MCF 10A (cell line): ENCODE measurements at regions of chr14 and their contacts with region 1.

Region 1: GRCh38 chr14:31207755-31208545 is at the start of gene HECTD1:
- DNase-seq: peak; percentile 77
- H3K4me3 Mint-ChIP-seq: peak within 1 kb of the TSS; percentile 89
- H3K27ac Mint-ChIP-seq: peak within 1 kb of the TSS; percentile 95
- H3K4me1 Mint-ChIP-seq: peaks cover 6% of the 10 kb centered on the region
- H3K27me3 Mint-ChIP-seq: no peaks in the 10 kb centered on the region
- CTCF ChIP-seq: peak; percentile 77
- total RNA-seq, gene HECTD1: 122 and 139 TPM in 2 replicates

Region 2: GRCh38 chr14:31180299-31181051 is 27.5 kb before region 1 on chr14:
- CTCF ChIA-PET with region 1: interaction called, 3 read pairs
- POLR2A ChIA-PET with region 1: interaction called, 13 read pairs
- intact Hi-C with region 1: no loop called
- DNase-seq: no peak
- H3K4me3 Mint-ChIP-seq: no peak overlapping the region
- H3K27ac Mint-ChIP-seq: peak overlapping the region; percentile 19
- H3K4me1 Mint-ChIP-seq: no peaks in the 10 kb centered on the region
- H3K27me3 Mint-ChIP-seq: no peaks in the 10 kb centered on the region
- CTCF ChIP-seq: no peak

Region 3: DNA sequence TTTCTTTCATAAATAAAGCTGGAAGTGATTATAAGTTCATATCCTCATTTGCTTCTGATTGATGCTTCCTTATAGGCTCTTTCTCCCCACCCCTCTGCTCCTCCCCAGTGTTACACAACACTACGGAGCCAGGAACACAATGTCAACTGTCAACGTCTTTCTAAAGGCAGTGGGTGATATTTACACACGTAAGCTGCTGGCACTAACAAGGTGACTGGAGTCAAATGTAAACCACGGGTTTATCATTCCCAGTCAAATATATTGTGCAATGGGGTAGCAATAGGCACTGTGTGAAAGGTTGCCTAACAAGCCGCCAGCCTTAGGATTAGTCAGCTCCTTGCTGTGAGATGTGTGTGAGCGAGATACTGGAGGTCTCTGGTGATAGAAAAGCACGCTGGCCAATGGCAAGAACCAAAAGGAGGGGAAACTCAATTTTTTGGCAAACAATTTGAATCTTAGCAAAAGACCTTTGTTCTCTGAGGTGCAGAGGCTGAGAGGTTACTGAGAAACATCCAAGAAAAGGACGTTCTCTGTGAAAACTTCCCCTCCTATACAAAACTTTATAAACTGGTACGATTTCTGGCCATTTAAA is 21.8 kb after region 1 on chr14:
- CTCF ChIA-PET with region 1: interaction called, 29 read pairs
- POLR2A ChIA-PET with region 1: interaction called, 139 read pairs
- intact Hi-C with region 1: no loop called
- DNase-seq: peak; percentile 100
- H3K4me3 Mint-ChIP-seq: peak overlapping the region; percentile 59
- H3K27ac Mint-ChIP-seq: peak overlapping the region; percentile 89
- H3K4me1 Mint-ChIP-seq: peaks cover 17% of the 10 kb centered on the region
- H3K27me3 Mint-ChIP-seq: no peaks in the 10 kb centered on the region
- CTCF ChIP-seq: no peak

Region 4: GRCh38 chr14:31263485-31264133 is 55.7 kb after region 1 on chr14:
- CTCF ChIA-PET with region 1: interaction called, 8 read pairs
- POLR2A ChIA-PET with region 1: interaction called, 15 read pairs
- intact Hi-C with region 1: loop called (anchors 2 kb)
- DNase-seq: peak; percentile 86
- H3K4me3 Mint-ChIP-seq: no peak overlapping the region
- H3K27ac Mint-ChIP-seq: peak overlapping the region; percentile 31
- H3K4me1 Mint-ChIP-seq: peaks cover 18% of the 10 kb centered on the region
- H3K27me3 Mint-ChIP-seq: no peaks in the 10 kb centered on the region
- CTCF ChIP-seq: no peak

Region 5: DNA sequence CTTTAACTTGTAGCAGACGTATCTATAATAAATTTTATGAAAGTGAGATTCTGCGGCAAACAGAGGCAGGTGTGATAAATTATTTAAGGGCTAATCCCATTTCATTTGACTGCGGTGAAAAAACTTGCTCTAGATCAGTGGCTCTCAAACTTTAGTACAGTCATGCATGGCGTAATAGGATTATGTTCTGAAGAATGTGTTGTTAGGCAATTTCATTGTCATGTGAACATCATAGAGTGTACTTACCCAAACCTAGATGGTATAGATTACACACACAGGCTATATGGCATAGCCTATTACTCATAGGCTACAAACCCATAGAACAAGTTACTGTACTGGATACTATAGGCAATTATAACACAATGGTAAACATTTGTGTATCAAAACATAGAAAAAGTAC is 128.7 kb after region 1 on chr14:
- CTCF ChIA-PET with region 1: interaction called, 6 read pairs
- POLR2A ChIA-PET with region 1: interaction called, 37 read pairs
- intact Hi-C with region 1: loop called (anchors 5 kb)
- DNase-seq: peak; percentile 88
- H3K4me3 Mint-ChIP-seq: no peak overlapping the region
- H3K27ac Mint-ChIP-seq: peak overlapping the region; percentile 27
- H3K4me1 Mint-ChIP-seq: peaks cover 6% of the 10 kb centered on the region
- H3K27me3 Mint-ChIP-seq: no peaks in the 10 kb centered on the region
- CTCF ChIP-seq: no peak

Region 6: GRCh38 chr14:31420319-31421111 is 212.6 kb after region 1 on chr14 and contains the start of gene HEATR5A:
- CTCF ChIA-PET with region 1: no interaction called
- POLR2A ChIA-PET with region 1: interaction called, 33 read pairs
- intact Hi-C with region 1: loop called (anchors 2 kb)
- DNase-seq: peak; percentile 94
- H3K4me3 Mint-ChIP-seq: peak within 1 kb of the TSS; percentile 99
- H3K27ac Mint-ChIP-seq: peak within 1 kb of the TSS; percentile 97
- H3K4me1 Mint-ChIP-seq: peaks cover 16% of the 10 kb centered on the region
- H3K27me3 Mint-ChIP-seq: no peaks in the 10 kb centered on the region
- CTCF ChIP-seq: no peak
- total RNA-seq, gene HEATR5A: 23.1 and 26.2 TPM in 2 replicates